ENCODE measurements at regions of chr1 and their contacts with region 1.

Region 1: GRCh38 chr1:17059739-17060460 is 6.1 kb upstream of the SDHB start:
- DNase-seq: peak; percentile 44
- ATAC-seq: peak; percentile 73 to 83

Region 2: GRCh38 chr1:17236779-17237560 is 177.1 kb after region 1 on chr1:
- intact Hi-C with region 1: loop called (anchors 2 to 10 kb)
- DNase-seq: peak; percentile 88
- ATAC-seq: peak; percentile 77 to 79

Region 3: DNA sequence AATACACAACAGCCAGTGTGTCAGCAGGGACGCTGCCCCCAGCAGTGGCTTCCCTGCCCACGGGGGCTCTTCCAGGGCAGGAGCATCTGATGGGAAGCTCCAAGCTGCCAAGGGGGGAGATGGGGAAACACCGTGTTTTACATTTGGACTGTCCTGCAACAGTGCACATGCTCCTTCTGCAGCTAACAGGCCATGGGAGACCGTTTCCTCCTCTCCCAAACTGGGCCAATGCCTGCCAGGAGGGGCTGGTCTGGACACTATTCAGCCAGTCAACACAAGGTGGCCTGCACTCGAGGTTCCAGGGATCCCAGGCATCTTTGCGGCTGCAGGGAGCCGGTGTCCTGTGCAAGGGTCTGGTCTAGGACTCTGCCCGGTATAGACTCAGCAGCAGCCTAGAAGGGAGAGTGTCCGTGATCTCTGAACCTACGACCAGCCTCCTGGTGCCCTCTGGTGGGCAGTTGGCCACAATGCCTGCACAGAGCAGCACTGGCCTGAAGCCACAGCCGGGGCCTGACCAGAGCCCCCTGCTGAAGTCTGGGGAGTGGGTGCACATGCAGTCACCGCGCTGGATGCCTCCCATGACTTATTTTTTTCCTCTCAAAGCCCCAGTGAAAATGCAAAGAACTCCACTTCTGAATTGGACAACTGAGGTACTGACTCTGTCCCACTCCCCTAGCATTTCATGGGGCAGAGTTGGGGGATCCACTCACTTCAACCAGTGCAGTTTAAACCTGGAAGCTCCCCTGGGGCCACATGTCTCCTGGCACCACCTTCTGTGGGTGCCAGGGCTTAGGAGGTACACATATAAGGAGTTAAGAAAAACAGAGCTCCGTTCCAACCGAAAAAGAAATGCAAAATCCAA is 346.2 kb after region 1 on chr1:
- intact Hi-C with region 1: loop called in 1 of 2 experiments (anchors 5 kb)
- DNase-seq: peak; percentile 60
- ATAC-seq: peak; percentile 86 to 87

Region 4: GRCh38 chr1:17661546-17662157 is 601.8 kb after region 1 on chr1:
- intact Hi-C with region 1: no loop called
- DNase-seq: peak; percentile 52
- ATAC-seq: peak; percentile 18 to 58

Measured in left cardiac atrium (tissue), 4 donors.